ENCODE measurements at regions of chr11 and their contacts with region 1.

Region 1: DNA sequence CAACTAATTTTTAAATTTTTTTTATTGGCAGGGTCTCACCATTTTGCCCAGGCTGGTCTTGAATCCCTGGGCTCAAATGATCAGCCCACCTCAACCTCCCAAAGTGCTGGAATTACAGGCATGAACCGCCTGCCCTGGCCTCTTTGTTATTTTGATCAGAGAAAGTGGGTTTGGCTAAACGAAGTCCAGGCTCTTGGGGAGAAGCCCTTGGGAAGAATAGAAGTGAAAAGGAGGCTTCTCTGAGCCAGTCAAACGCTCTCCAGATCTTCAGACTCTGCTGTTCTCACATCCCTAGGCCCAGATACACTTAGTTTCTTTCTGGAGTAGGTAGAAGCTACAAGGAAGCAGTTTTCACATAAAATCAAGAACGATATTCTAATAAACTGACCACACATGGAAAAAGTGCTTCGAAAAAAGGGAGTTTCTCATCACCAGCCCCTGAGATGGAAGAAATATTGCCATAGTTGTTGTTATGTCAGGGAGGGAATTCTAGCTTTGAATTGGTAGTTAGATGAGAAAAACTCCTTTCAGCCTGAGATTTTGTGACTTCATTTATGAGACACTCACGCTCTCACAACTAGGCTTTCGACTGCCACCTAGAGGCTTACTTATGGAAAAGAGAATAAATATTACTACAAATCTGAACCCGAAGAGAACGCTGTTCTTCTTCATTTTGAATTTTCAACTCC is 41.7 kb upstream of the AQP11 start:
- DNase-seq: peak in 1 of 2 experiments; percentile 46
- H3K4me3 ChIP-seq: peak overlapping the region in 1 of 4 experiments; percentile 48; a peak in 2 of 8 replicates
- H3K27ac ChIP-seq: peak overlapping the region; percentile 85
- H3K4me1 ChIP-seq: peaks cover 3 to 11% (median 6%) of the 10 kb centered on the region in 4 experiments
- H3K27me3 ChIP-seq: no peaks in the 10 kb centered on the region
- CTCF ChIP-seq: peak in 2 of 3 experiments; percentile 54 to 55; a peak in 3 of 4 replicates
- EP300 ChIP-seq: no peak
- POLR2A ChIP-seq: no peak
- RAD21 ChIP-seq: peak; percentile 79 to 83

Region 2: DNA sequence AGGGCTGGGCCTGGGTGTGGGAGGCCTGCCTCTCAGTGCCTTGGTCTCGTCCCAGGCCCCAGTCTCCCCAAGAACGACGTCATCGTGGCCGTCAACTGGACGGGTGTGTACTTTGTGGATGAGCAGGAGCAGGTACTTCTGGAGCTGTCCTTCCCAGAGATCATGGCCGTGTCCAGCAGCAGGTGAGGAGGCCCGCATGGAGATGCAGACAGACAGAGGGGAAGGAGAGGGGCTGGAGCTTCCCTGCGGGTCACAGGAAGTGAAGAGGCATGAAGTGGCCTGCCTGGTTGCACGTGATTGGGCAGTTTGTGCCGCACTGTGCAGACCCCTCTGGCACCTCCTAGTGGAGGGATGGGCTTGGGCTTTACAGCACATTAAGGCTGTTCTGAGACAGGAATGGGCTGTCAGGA is 349.6 kb before region 1 on chr11:
- CTCF ChIA-PET with region 1: interaction called, 38 read pairs
- POLR2A ChIA-PET with region 1: no interaction called
- DNase-seq: peak; percentile 44 to 85
- H3K4me3 ChIP-seq: no peak overlapping the region
- H3K27ac ChIP-seq: no peak overlapping the region
- H3K4me1 ChIP-seq: no peaks in the 10 kb centered on the region; a peak in 1 of 7 replicates
- H3K27me3 ChIP-seq: no peaks in the 10 kb centered on the region
- CTCF ChIP-seq: peak in 2 of 3 experiments; percentile 66 to 96; a peak in 3 of 4 replicates
- EP300 ChIP-seq: no peak
- POLR2A ChIP-seq: no peak
- RAD21 ChIP-seq: peak; percentile 58 to 68

Region 3: GRCh38 chr11:77411717-77412441 is 136.1 kb before region 1 on chr11:
- CTCF ChIA-PET with region 1: interaction called, 27 read pairs
- POLR2A ChIA-PET with region 1: interaction called, 3 read pairs
- DNase-seq: peak; percentile 57 to 84
- H3K4me3 ChIP-seq: peak overlapping the region; percentile 61 to 83 (median 66)
- H3K27ac ChIP-seq: peak overlapping the region; percentile 20; the same call in 1 of the 2 replicates
- H3K4me1 ChIP-seq: peaks cover 0 to 22% (median 15%) of the 10 kb centered on the region in 4 experiments; a peak in 5 of 7 replicates
- H3K27me3 ChIP-seq: no peaks in the 10 kb centered on the region
- CTCF ChIP-seq: no peak
- EP300 ChIP-seq: no peak
- POLR2A ChIP-seq: peak in 1 of 2 experiments; percentile 60; a peak in 2 of 3 replicates
- RAD21 ChIP-seq: peak in 1 of 2 experiments; percentile 45; a peak in 3 of 4 replicates

Region 4: DNA sequence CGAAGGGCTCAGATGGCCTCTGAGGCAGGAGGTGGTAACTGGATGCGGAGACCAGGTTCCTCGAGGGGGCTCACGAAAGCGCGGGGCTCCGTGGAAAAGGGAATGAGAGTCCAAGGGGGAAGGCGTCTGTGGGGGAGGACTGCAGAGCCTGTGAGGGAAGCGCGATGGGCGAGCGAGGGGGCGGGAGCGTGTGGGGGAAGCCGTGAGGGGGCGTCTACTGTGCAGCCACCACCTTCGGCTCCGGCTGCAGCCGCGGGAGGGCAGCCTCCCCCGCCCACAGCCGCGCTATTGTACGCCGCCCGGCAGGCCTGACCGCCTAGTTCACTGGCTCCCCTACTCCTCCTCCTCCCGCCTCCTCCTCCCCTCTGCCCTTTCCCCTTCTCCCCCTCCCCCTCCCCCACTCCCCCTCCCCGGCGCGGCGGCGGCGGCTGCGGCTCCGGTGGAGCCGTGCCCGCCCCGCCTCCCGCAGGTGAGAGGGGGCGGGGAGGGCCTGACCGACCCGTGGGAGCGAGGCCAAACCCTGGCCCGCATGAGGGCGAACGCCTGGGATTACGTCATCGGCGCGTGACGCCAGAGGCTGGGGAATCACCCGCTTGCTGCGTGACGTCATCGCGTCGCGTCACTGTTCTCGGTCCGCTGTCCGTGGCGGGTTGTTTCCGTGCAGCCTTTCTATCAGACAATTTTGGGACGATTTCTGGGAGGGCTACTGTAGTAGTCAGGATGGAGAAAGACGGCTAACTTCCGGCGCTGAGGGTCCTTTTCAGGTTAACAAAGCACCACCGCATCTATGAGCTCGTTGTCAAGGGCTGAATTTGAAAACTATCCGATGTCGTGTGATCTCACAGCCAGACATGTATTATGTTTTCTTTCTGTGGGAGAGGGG is 74.0 kb before region 1 on chr11 and contains the start of gene PAK1:
- CTCF ChIA-PET with region 1: interaction called, 22 read pairs
- POLR2A ChIA-PET with region 1: interaction called, 3 read pairs
- DNase-seq: peak; percentile 75 to 94
- H3K4me3 ChIP-seq: peak within 1 kb of the TSS; percentile 82 to 90 (median 84)
- H3K27ac ChIP-seq: peak within 1 kb of the TSS; percentile 61; the same call in 1 of the 2 replicates
- H3K4me1 ChIP-seq: peaks cover 4 to 20% (median 12%) of the 10 kb centered on the region in 4 experiments
- H3K27me3 ChIP-seq: no peaks in the 10 kb centered on the region
- CTCF ChIP-seq: peak; percentile 12 to 24 (median 12)
- EP300 ChIP-seq: no peak
- POLR2A ChIP-seq: peak; percentile 33 to 76
- RAD21 ChIP-seq: peak; percentile 43 to 51; a peak in 3 of 4 replicates
- total RNA-seq, gene PAK1: 142 and 151 TPM in 2 replicates

Region 5: DNA sequence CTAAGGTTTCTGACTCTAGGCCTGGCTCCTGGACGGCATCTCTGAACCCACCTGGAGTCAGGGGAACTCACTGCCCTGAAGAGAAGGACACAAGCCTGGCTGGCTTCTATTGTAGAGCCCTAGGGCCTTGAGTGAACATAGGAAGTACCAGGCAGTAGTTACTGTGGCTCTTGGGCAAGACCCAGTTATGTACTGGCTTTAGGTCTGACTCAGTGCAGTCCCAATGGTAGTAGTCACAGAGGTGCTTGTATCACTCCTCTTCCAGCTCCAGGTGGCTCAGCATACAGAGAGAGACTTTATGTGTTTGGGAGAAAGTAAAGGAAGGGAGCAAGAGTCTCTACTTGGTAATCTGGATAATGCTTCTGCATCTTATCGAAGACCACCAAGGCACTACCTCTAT is 60.2 kb before region 1 on chr11:
- CTCF ChIA-PET with region 1: interaction called, 10 read pairs
- POLR2A ChIA-PET with region 1: interaction called, 4 read pairs
- DNase-seq: peak in 1 of 2 experiments; percentile 28
- H3K4me3 ChIP-seq: no peak overlapping the region
- H3K27ac ChIP-seq: no peak overlapping the region
- H3K4me1 ChIP-seq: no peaks in the 10 kb centered on the region
- H3K27me3 ChIP-seq: no peaks in the 10 kb centered on the region
- CTCF ChIP-seq: no peak
- EP300 ChIP-seq: no peak
- POLR2A ChIP-seq: no peak
- RAD21 ChIP-seq: no peak

Region 6: DNA sequence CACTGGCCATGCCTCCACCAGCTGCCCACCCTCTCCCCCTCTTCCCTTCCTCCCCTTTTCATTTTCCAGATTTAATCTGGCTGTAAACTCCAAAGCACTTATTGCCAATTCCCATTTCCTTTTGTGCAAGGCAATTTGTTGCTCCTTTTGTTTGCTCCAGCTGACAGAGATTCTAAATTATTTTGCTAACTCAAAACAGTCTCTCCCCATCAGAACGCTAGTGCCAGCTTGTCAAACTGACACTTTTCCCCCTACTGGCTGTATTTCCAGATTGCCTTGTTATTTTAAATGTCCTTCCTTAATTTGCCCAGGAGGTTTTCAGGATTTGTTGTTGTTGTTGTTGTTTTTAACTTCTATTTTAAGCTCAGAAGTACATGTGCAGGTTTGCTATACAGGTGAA is 17.1 kb before region 1 on chr11:
- CTCF ChIA-PET with region 1: interaction called, 11 read pairs
- POLR2A ChIA-PET with region 1: interaction called, 3 read pairs
- DNase-seq: no peak
- H3K4me3 ChIP-seq: no peak overlapping the region
- H3K27ac ChIP-seq: no peak overlapping the region
- H3K4me1 ChIP-seq: peaks cover 0 to 3% (median 1%) of the 10 kb centered on the region in 4 experiments; a peak in 3 of 7 replicates
- H3K27me3 ChIP-seq: no peaks in the 10 kb centered on the region
- CTCF ChIP-seq: peak in 1 of 3 experiments; percentile 24; a peak in 1 of 4 replicates
- EP300 ChIP-seq: no peak
- POLR2A ChIP-seq: no peak
- RAD21 ChIP-seq: peak in 1 of 2 experiments; percentile 11; a peak in 1 of 4 replicates

Measured in H1 (cell line).